ENCODE measurements at regions of chr5 and their contacts with region 1.

Region 1: DNA sequence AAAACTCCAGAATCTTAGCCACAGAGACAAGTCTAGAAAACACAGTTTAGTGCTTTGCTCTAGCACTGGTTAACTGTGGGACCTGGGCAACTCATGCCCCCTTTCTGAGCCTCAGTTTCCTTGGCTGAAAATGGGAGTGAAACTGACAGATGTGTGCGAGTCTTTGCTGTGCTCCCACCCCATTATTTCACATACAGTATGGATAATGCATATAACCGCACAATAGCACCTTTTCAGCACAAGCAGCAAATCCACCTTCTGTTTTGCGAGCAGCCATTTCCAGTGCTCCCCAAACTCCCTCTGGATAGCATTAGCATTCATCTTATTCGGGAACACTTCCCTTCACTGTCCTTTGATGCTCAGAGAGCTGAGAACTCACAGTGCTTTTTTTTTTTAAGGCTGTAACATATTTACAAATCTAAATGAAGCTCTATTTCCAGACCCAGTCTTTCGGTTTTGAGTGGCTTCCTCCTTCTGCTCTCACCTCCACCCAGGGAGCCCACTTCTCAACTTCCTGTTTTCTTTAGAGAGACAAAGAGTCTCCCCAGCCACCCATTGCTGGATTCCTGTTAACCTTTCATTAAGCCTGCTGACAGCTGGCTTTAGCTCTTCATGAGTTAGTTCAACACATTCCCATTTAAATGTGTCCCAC is 49.2 kb downstream of the TIMD4 start:
- DNase-seq: peak in 9 of 14 experiments; percentile 8 to 81 (median 39)
- ATAC-seq: peak; percentile 67
- H3K4me3 ChIP-seq: peak overlapping the region; percentile 5
- H3K4me3 Mint-ChIP-seq: peak overlapping the region; percentile 52
- H3K27ac ChIP-seq: peak overlapping the region; percentile 29 to 76
- H3K27ac Mint-ChIP-seq: peak overlapping the region; percentile 89
- H3K4me1 ChIP-seq: peaks cover 27% of the 10 kb centered on the region
- H3K4me1 Mint-ChIP-seq: peaks cover 47% of the 10 kb centered on the region
- H3K27me3 ChIP-seq: no peaks in the 10 kb centered on the region
- H3K27me3 Mint-ChIP-seq: no peaks in the 10 kb centered on the region
- CTCF ChIP-seq: no peak

Region 2: GRCh38 chr5:156561651-156562050 is 352.2 kb before region 1 on chr5:
- CTCF ChIA-PET with region 1: no interaction called
- POLR2A ChIA-PET with region 1: no interaction called
- intact Hi-C with region 1: no loop called
- DNase-seq: no peak
- ATAC-seq: no peak
- H3K4me3 ChIP-seq: no peak overlapping the region
- H3K4me3 Mint-ChIP-seq: no peak overlapping the region
- H3K27ac ChIP-seq: no peak overlapping the region
- H3K27ac Mint-ChIP-seq: no peak overlapping the region
- H3K4me1 ChIP-seq: no peaks in the 10 kb centered on the region
- H3K4me1 Mint-ChIP-seq: no peaks in the 10 kb centered on the region
- H3K27me3 ChIP-seq: no peaks in the 10 kb centered on the region
- H3K27me3 Mint-ChIP-seq: peaks cover 26% of the 10 kb centered on the region
- CTCF ChIP-seq: no peak

Region 3: GRCh38 chr5:156929366-156929948 is 15.6 kb after region 1 on chr5:
- CTCF ChIA-PET with region 1: interaction called, 3 read pairs
- POLR2A ChIA-PET with region 1: interaction called, 17 read pairs
- intact Hi-C with region 1: no loop called
- DNase-seq: peak in 1 of 14 experiments; percentile 50
- ATAC-seq: no peak
- H3K4me3 ChIP-seq: no peak overlapping the region
- H3K4me3 Mint-ChIP-seq: no peak overlapping the region
- H3K27ac ChIP-seq: peak overlapping the region; percentile 14 to 30
- H3K27ac Mint-ChIP-seq: peak overlapping the region; percentile 55
- H3K4me1 ChIP-seq: peaks cover 29% of the 10 kb centered on the region
- H3K4me1 Mint-ChIP-seq: peaks cover 51% of the 10 kb centered on the region
- H3K27me3 ChIP-seq: no peaks in the 10 kb centered on the region
- H3K27me3 Mint-ChIP-seq: no peaks in the 10 kb centered on the region
- CTCF ChIP-seq: no peak